ENCODE measurements at regions of chrX and their contacts with region 1.

Region 1: DNA sequence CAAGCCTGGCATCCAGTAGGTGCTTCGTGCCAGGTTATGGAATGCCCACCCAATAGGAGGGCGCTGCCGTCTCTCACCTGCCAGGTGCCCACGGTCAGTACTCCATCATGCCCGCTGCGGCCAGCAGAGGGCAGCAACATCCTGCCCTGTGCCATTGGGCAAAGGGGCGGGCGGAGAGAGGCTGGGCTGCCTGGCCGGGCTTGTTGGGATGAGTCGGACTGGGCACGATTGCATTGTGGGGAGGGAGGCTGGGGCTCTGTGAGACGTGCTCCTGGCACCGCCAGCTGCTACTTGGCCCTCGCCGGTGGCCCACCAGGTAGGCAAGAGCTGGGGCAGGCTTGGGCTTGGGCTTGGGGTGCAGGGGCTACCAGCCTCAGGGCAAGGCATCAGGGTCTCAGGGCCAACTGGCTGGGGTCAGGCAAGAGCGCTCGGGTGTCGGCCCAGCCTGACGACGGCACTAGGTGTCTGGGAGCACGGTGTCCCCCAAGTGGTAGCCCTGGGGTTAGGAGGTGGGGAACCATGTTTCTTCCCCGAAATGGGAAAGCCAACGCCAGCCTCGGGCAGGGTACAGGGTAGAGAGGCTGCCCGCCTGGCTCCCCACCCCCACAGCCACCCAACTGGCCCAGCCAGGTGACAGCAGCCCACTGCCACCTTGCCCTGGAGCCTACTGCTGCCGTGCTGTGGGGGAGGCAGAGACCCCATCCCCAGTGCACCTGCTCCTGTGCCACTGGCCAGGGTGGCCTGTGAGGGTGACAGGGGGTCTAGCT is at the start of gene PLXNB3:
- DNase-seq: peak; percentile 76
- ATAC-seq: peak; percentile 80
- H3K4me3 ChIP-seq: no peak within 1 kb of the TSS
- H3K4me3 Mint-ChIP-seq: no peak within 1 kb of the TSS
- H3K27ac ChIP-seq: no peak within 1 kb of the TSS
- H3K27ac Mint-ChIP-seq: peak within 1 kb of the TSS; percentile 53
- H3K4me1 ChIP-seq: peaks cover 0 to 18% of the 10 kb centered on the region in 2 donors
- H3K4me1 Mint-ChIP-seq: peaks cover 14% of the 10 kb centered on the region
- H3K27me3 ChIP-seq: no peaks in the 10 kb centered on the region
- H3K27me3 Mint-ChIP-seq: no peaks in the 10 kb centered on the region
- CTCF ChIP-seq: peak; percentile 75
- total RNA-seq, gene PLXNB3: not detected in 2 replicates

Region 2: GRCh38 chrX:153818571-153819383 is 54.6 kb after region 1 on chrX:
- CTCF ChIA-PET with region 1: no interaction called
- POLR2A ChIA-PET with region 1: no interaction called
- intact Hi-C with region 1: no loop called
- DNase-seq: peak; percentile 64
- ATAC-seq: peak; percentile 81
- H3K4me3 ChIP-seq: peak overlapping the region in 4 of 5 experiments; percentile 13 to 45 (median 40)
- H3K4me3 Mint-ChIP-seq: peak overlapping the region; percentile 47
- H3K27ac ChIP-seq: no peak overlapping the region
- H3K27ac Mint-ChIP-seq: no peak overlapping the region
- H3K4me1 ChIP-seq: peaks cover 4 to 23% of the 10 kb centered on the region in 2 donors
- H3K4me1 Mint-ChIP-seq: peaks cover 16% of the 10 kb centered on the region
- H3K27me3 ChIP-seq: peaks cover 0 to 35% (median 4%) of the 10 kb centered on the region in 4 experiments
- H3K27me3 Mint-ChIP-seq: peaks cover 20% of the 10 kb centered on the region
- CTCF ChIP-seq: no peak

Region 3: DNA sequence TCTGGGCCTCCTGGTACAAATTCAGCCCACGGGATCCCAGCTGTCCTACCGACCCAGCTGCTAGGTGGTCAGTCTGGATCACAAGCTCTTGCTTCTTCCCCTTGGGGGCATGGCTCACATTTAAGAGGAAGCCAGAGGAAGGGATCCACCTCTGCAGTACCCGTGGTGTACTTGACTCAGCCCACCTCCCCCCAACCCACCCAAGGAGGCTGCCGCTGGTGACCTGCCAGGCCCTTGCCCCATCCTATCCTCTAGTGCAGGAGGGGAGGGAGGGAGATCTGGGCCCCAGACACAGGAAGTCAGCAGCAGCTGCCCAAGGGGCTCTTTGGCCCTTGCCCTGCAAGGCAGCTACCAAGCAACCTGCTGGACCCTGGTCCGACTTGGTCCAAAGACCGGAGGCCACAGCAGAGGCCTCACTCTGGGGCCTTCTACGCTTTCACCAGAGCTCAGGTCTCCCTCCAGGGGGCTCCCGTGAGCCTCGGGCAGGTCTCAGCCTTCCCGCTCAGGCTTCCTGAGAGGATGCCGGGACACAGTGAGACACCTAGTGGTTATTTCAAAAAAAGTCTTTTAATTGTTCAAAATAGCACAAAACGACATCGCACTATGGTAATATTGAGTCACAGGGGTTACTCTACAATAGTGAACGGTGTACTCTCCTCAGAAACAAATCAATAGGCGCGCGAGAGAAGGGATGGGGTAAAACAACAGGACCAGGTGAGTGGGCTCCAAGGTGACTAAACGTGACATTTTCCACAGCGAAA is 183.0 kb after region 1 on chrX:
- CTCF ChIA-PET with region 1: interaction called, 35 read pairs
- POLR2A ChIA-PET with region 1: interaction called, 4 read pairs
- intact Hi-C with region 1: no loop called
- DNase-seq: peak; percentile 83
- ATAC-seq: peak; percentile 88
- H3K4me3 ChIP-seq: no peak overlapping the region
- H3K4me3 Mint-ChIP-seq: no peak overlapping the region
- H3K27ac ChIP-seq: no peak overlapping the region
- H3K27ac Mint-ChIP-seq: peak overlapping the region; percentile 34
- H3K4me1 ChIP-seq: peaks cover 9 to 39% of the 10 kb centered on the region in 2 donors
- H3K4me1 Mint-ChIP-seq: peaks cover 15% of the 10 kb centered on the region
- H3K27me3 ChIP-seq: no peaks in the 10 kb centered on the region
- H3K27me3 Mint-ChIP-seq: no peaks in the 10 kb centered on the region
- CTCF ChIP-seq: peak; percentile 80

Region 4: GRCh38 chrX:153953342-153953830 is 189.2 kb after region 1 on chrX:
- CTCF ChIA-PET with region 1: interaction called, 35 read pairs
- POLR2A ChIA-PET with region 1: no interaction called
- intact Hi-C with region 1: no loop called
- DNase-seq: peak; percentile 75
- ATAC-seq: peak; percentile 84
- H3K4me3 ChIP-seq: no peak overlapping the region
- H3K4me3 Mint-ChIP-seq: no peak overlapping the region
- H3K27ac ChIP-seq: no peak overlapping the region
- H3K27ac Mint-ChIP-seq: peak overlapping the region; percentile 72
- H3K4me1 ChIP-seq: peaks cover 0 to 7% of the 10 kb centered on the region in 2 donors
- H3K4me1 Mint-ChIP-seq: peaks cover 2% of the 10 kb centered on the region
- H3K27me3 ChIP-seq: no peaks in the 10 kb centered on the region
- H3K27me3 Mint-ChIP-seq: no peaks in the 10 kb centered on the region
- CTCF ChIP-seq: peak; percentile 80

Region 5: DNA sequence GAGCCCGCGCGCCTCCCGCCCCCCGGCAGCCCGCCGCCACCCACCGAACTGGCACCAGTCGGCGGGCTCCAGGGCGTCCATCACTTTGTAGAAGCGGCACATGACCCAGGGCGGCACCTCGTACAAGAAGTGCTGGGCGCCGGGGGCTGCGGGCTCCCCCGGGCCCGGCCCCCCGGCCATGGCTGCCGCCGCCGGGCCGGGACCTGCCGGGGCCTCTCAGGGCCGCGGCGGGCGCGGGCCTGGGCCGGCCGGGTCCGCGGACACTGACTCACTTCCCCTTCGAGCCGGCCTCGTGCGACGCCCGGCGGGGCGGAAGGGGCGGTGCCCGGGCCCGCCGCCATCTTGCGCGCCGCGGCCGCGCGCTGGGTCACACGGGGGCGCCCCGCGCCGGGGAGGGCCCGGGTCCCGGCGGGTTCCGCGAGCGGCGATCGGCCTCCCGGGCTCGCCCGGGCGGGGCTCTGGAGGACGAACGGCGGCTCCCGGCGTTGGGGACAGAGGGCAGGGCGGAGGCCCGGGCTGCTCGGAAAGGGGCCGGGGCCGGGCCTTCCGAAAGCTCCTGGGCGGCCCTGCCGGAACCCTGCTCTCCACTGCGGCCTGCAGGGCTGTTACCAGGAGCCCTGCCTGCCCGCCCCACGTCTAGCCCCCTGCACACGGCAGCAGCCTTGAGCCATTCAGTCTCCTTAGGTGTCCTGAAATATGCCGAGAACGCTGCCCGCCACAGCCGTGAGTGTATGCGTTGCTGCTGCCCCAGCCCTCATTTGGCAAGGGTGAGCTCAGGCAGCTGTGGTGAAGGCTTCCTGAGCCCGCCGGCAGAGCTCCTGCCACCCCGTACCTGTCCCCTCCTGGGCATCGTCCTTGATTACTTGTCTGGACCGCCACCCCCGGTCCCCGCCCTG is 255.7 kb after region 1 on chrX and contains the start of gene IRAK1:
- CTCF ChIA-PET with region 1: no interaction called
- POLR2A ChIA-PET with region 1: interaction called, 12 read pairs
- intact Hi-C with region 1: no loop called
- DNase-seq: peak; percentile 74
- ATAC-seq: peak; percentile 82
- H3K4me3 ChIP-seq: peak within 1 kb of the TSS in 4 of 5 experiments; percentile 55 to 67 (median 64)
- H3K4me3 Mint-ChIP-seq: peak within 1 kb of the TSS; percentile 88
- H3K27ac ChIP-seq: peak within 1 kb of the TSS; percentile 50 to 74
- H3K27ac Mint-ChIP-seq: peak within 1 kb of the TSS; percentile 91
- H3K4me1 ChIP-seq: peaks cover 6 to 21% of the 10 kb centered on the region in 2 donors
- H3K4me1 Mint-ChIP-seq: peaks cover 18% of the 10 kb centered on the region
- H3K27me3 ChIP-seq: no peaks in the 10 kb centered on the region
- H3K27me3 Mint-ChIP-seq: no peaks in the 10 kb centered on the region
- CTCF ChIP-seq: no peak
- total RNA-seq, gene IRAK1: 112 and 121 TPM in 2 replicates